Gastrocnemius medialis (tissue), 4 donors: ENCODE measurements at regions of chr6 and their contacts with region 1.

Region 1: GRCh38 chr6:39377539-39377950 is 55.0 kb upstream of the KCNK16 start:
- DNase-seq: peak; percentile 12 to 23
- ATAC-seq: peak in 1 of 2 donors; percentile 63
- H3K4me3 ChIP-seq: no peak overlapping the region
- H3K27ac ChIP-seq: no peak overlapping the region
- H3K4me1 ChIP-seq: no peaks in the 10 kb centered on the region
- H3K27me3 ChIP-seq: no peaks in the 10 kb centered on the region
- CTCF ChIP-seq: peak in 4 of 5 experiments; percentile 30 to 48 (median 46)
- POLR2A ChIP-seq: no peak

Region 2: GRCh38 chr6:39772559-39773273 is 395.2 kb after region 1 on chr6:
- in situ Hi-C with region 1: loop called in 1 of 4 experiments (anchors 10 kb)
- intact Hi-C with region 1: no loop called
- DNase-seq: no peak
- ATAC-seq: no peak
- H3K4me3 ChIP-seq: no peak overlapping the region
- H3K27ac ChIP-seq: no peak overlapping the region
- H3K4me1 ChIP-seq: peaks cover 14 to 16% of the 10 kb centered on the region in 2 donors
- H3K27me3 ChIP-seq: no peaks in the 10 kb centered on the region
- CTCF ChIP-seq: no peak
- POLR2A ChIP-seq: no peak

Region 3: DNA sequence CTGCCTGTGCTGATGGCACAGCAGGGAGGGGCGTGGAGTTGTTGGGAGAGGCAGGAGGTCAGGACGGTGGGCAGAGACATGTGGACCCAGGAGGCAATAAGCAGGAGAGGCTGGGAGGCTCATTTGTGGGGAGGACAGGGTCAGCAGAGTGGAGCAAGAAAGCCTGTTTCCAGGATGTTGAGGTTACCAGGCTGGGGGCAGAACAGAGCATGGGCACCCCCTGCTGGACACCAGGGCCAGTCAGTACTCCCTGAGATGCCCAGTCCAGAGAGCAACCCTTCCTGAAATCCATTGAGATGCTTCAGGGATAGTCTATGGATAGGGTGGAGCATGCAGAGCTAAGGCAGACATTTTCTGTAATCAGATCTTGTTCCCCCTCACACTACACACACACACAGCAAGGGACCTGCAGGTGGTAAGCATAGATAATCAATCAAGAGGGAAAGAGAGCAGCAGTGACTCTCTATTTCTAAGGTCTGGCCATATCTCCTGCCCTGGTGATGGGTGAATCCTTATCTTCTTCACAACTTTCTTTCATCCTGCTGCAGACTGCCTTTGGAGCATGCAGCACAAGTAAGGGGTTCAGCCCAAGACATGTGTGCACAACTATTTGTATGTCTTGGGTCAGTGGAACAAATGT is 515.1 kb after region 1 on chr6:
- in situ Hi-C with region 1: loop called (anchors 25 kb)
- intact Hi-C with region 1: loop called (anchors 10 kb)
- DNase-seq: peak in 1 of 2 donors; percentile 47
- ATAC-seq: peak in 1 of 2 donors; percentile 61
- H3K4me3 ChIP-seq: no peak overlapping the region
- H3K27ac ChIP-seq: peak overlapping the region in 1 of 4 donors; percentile 3
- H3K4me1 ChIP-seq: peaks cover 10 to 11% of the 10 kb centered on the region in 2 donors
- H3K27me3 ChIP-seq: no peaks in the 10 kb centered on the region
- CTCF ChIP-seq: peak; percentile 39 to 68 (median 64)
- POLR2A ChIP-seq: no peak